Body of pancreas (tissue), 4 donors: ENCODE measurements at regions of chr14 and their contacts with region 1.

Region 1: DNA sequence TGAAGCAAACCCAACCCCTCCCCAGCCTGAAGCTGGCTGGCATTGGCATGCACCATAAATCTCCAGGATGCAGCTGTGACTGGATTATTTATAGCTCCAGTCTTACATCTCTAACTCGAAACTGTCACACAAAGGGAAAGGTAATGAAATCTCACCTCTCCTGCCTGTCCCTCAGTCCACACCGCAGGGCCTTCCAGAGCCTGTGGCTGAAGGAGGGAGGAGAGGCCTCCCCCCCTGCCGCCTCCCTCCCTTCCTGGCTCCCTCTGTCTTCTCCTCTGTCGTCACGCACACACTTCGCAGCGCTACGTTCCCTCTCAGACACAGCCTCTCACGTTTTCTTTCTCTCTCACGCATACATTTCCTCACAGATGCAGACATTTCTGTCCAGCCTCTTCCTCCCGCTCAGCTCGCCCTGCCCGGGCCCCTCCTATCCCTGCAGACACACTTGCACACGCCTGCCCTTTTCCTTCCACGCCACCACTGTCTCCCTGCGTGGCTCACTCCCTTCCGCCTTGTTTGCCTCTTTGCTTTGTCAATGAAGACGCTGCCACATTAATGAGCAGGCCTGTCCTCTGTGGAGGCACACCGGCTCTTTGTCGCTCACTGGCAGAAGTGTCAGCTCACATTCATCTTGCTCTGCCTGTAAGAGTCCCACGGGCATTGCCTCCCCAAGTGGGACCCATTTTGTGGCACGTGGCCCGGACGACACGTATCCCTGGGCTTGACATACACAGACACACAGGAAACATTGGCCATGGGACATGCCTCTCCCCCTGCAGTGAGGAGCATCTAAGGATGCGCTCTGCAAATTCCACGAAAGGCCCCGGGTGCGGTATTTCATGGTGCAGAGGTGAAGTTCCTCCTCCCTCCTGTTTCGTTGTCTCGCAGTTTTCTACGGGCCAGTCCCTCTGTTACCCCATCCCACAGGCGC is 27.9 kb downstream of the IRF2BPL start:
- DNase-seq: peak in 1 of 4 donors; percentile 32
- ATAC-seq: no peak
- H3K4me3 ChIP-seq: no peak overlapping the region
- H3K27ac ChIP-seq: peak overlapping the region in 1 of 4 donors; percentile 18
- H3K4me1 ChIP-seq: peaks cover 49% of the 10 kb centered on the region
- H3K27me3 ChIP-seq: no peaks in the 10 kb centered on the region
- CTCF ChIP-seq: no peak
- POLR2A ChIP-seq: no peak

Region 2: GRCh38 chr14:76962303-76962660 is 38.3 kb before region 1 on chr14:
- intact Hi-C with region 1: loop called (anchors 5 kb)
- DNase-seq: no peak
- ATAC-seq: peak; percentile 8
- H3K4me3 ChIP-seq: no peak overlapping the region
- H3K27ac ChIP-seq: peak overlapping the region; percentile 25 to 89 (median 80)
- H3K4me1 ChIP-seq: peaks cover 30% of the 10 kb centered on the region
- H3K27me3 ChIP-seq: no peaks in the 10 kb centered on the region
- CTCF ChIP-seq: no peak
- POLR2A ChIP-seq: no peak

Region 3: DNA sequence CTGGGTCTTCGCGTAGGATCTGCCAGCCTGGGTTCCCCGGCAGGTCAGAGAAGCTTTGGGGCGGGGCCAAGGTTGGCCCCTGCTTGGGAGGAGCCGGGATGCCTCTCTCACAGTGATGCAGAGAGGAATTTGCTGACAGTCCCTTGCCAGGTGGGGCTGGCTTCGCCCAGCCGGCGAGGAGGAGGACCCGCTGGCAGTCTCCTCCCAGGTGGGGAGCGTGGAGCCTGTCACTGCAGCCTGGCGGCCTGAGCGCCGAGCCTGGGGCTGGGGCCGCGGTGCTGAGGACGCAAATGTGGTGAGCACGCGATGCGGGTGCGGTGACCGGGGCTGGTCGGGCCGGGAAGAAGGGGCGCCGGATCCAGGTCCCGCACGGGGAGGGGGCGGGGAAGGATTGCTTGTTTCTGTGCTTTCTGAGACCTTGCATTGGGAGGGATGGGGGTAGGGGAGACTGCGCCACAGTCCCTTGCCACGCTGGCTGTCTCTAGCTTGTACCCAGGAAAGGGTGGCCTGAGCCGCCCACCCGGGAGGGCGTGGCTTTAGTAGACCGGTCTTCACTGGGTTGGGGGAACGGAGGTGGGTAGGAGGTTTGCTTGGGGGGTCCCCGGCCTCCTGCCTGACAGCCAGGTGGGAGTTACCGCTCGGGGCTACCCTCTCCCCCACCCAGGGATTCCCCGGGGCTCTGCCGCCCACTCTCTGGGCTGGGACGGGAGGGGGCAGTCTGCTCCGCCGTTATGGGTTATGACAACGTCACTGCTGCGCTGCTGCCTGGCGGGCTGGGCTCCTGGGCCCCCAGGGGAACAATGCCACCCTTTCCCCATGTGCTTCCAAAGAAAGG is 181.2 kb after region 1 on chr14 and contains the start of gene TMEM63C:
- intact Hi-C with region 1: no loop called
- DNase-seq: peak; percentile 52 to 72 (median 68)
- ATAC-seq: peak; percentile 78
- H3K4me3 ChIP-seq: peak within 1 kb of the TSS; percentile 21 to 34
- H3K27ac ChIP-seq: no peak within 1 kb of the TSS
- H3K4me1 ChIP-seq: peaks cover 19% of the 10 kb centered on the region
- H3K27me3 ChIP-seq: no peaks in the 10 kb centered on the region
- CTCF ChIP-seq: no peak
- POLR2A ChIP-seq: peak in 1 of 3 donors; percentile 41
- total RNA-seq, gene TMEM63C: 0.33 to 3.6 TPM

Region 4: DNA sequence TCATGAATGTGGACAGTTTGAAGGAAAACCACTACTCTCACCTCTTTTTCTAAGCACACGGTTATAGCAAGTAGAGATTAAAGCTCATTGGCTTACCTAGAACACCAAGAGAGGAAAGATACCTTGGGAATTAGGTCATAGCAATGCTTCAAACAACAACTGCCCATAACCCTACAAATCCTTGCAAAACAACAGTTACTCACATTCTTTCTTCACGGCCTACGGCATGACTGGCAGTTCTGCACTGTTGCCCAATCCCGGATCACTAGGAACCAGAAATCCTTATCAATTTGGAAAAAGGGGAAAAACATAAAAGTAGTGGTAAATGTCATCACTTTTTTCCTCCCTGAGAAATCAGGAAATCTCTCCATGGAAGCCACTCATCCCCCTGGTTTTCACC is 507.6 kb after region 1 on chr14:
- intact Hi-C with region 1: no loop called
- DNase-seq: no peak
- ATAC-seq: no peak
- H3K4me3 ChIP-seq: no peak overlapping the region
- H3K27ac ChIP-seq: no peak overlapping the region
- H3K4me1 ChIP-seq: no peaks in the 10 kb centered on the region
- H3K27me3 ChIP-seq: no peaks in the 10 kb centered on the region
- CTCF ChIP-seq: no peak
- POLR2A ChIP-seq: no peak